Endothelial cell of umbilical vein (primary cell): ENCODE measurements at regions of chr7 and their contacts with region 1.

Region 1: DNA sequence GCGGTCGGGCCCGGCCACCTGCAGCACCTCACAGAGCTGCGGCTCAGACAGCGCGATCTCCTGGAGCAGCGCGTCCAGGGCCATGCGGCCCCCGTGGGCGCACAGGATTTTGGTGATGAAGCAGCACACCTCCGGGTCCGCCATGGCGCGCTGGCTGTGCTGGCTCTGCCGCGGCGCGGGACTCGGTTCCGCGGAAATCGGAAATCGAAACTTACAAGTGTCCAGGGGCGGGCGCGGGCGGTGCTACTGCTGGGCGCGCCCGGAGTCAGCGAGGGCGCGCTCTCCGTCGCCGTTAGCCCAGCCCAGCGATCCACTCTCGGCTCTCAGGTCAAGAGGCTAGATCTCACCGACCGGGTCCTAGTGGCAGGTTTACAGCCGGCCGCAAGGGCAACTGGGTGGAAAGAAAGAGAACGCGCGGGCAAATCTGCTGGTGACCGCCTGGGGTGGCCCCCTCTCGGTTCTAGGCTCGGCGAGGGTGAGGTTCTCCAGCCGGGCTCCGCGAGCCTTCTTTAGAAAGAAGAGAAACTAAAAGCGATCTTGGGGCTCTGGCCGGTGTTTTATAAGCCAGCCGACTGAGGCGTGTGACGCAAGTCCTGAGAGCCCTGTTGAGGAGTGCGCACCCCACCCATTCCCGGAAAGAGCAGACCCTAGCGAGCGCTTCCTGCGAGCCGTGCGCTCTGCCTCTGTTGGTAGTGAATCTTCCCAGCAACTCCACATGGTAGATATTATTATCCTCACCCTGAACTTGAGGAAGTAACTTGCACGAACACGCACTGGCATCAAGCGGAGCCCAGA is at the start of gene ZC3HAV1:
- DNase-seq: peak; percentile 79
- H3K4me3 ChIP-seq: peak within 1 kb of the TSS; percentile 69 to 87 (median 71)
- H3K27ac ChIP-seq: peak within 1 kb of the TSS; percentile 64
- H3K4me1 ChIP-seq: peaks cover 13% of the 10 kb centered on the region
- H3K27me3 ChIP-seq: no peaks in the 10 kb centered on the region
- CTCF ChIP-seq: no peak
- POLR2A ChIP-seq: peak; percentile 92
- total RNA-seq, gene ZC3HAV1: 36.8 and 37.7 TPM in 2 replicates

Region 2: DNA sequence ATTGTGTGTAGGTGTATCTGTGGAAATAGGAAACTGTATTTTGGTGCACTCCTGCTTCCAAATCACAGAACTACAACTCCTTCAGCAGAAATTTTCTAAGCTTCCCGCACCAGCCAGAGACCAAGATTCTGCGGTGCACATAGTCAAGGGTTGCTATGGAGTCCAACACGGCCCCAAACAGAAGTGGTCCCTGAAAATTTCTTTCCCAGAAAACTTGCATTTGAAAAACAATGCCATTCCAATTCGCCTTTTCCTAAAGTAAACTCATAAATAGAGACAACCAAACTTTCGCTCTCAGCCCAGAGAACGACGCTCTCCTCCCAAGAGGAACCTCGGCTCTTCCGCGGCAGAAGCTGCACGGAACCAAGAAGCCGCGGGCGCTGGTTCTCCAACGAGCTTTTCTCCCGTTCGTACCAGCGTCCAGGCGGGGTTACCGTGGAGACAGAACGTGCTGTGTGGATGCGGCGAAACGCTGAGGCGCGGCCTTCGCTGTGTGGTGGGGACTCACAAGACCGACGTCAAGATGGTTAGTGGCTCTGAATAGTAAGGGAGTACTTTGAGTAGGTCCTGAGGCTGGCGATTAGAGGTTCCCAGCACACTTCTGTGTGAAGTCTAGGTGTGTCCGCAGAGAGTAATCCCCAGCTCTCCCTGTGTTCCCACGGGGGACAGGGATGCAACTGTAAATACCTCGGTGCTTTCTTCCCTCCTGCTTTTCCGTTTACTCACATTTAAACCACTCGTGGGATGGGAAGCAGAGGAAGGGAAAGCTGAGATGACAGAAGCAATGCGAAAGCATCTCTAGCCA is 24.2 kb after region 1 on chr7:
- CTCF ChIA-PET with region 1: interaction called, 4 read pairs
- POLR2A ChIA-PET with region 1: no interaction called
- dilution Hi-C with region 1: no loop called
- intact Hi-C with region 1: loop called (anchors 1 kb)
- DNase-seq: peak; percentile 94
- H3K4me3 ChIP-seq: peak overlapping the region; percentile 54 to 87 (median 66)
- H3K27ac ChIP-seq: peak overlapping the region; percentile 41
- H3K4me1 ChIP-seq: peaks cover 4% of the 10 kb centered on the region
- H3K27me3 ChIP-seq: peaks cover 0 to under 1% of the 10 kb centered on the region in 2 experiments
- CTCF ChIP-seq: no peak
- POLR2A ChIP-seq: peak; percentile 66

Region 3: DNA sequence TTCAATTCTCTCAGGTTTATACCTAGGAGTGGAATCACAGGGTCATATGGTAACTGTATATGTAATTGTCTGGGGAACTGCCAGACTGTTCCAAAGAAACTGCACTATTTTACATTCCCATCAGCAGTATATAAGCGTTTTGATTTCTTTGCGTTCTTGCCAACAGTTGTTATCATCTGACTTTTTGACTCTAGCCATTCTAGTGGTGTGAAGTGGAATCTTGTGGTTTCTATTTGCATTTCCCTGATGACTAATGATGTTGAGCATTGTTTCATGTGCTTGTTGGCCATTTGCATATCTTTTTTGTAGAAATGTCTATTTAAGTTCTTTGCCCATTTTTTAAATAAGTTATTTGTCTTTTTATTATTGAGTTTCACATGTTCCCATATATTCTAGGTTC is 44.4 kb after region 1 on chr7:
- CTCF ChIA-PET with region 1: no interaction called
- POLR2A ChIA-PET with region 1: no interaction called
- dilution Hi-C with region 1: no loop called
- intact Hi-C with region 1: loop called (anchors 2 kb)
- DNase-seq: peak; percentile 91
- H3K4me3 ChIP-seq: no peak overlapping the region
- H3K27ac ChIP-seq: no peak overlapping the region
- H3K4me1 ChIP-seq: peaks cover 11% of the 10 kb centered on the region
- H3K27me3 ChIP-seq: no peaks in the 10 kb centered on the region
- CTCF ChIP-seq: no peak
- POLR2A ChIP-seq: no peak

Region 4: DNA sequence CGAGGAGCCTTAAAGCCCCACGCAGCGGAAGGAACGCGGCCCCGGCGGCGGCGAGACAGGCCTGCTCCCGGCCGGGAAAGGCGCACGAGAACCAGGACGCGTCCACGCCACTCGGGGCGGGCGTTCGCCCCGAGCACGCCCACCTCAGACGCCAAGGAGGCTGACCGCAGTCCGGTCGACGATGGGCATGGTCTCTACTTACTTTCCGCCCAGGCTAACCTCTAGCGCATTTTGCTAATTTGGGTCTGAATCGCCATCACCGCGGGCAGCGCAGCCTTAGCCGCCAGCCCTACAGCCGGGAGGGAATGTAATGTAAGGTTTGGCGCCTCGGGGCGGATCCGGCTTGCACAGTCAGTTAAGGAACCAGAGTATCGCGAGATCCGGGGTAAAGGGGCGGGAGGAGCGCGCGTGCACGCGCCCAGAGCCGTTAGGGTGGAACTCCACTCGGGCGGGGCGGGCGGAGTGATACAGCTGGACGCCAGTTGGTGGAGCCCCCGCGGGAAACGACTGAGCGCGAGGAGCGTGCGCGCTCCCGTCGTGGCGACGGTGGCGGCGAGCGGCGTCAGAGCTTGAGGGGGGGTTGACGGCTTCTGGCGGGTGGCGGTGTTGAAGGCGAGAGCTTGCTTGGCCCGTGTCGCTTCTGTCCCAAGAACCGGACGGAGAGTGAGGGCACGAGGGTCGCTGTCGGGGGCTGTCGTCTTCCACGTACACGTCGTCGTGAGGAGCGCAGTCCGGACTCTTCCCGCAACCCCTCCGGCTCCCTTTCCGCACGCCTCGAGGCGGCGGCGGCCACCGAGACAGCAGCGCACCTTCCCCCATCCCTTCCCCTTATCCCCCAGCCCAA is 250.2 kb after region 1 on chr7 and contains the start of gene LUC7L2:
- CTCF ChIA-PET with region 1: no interaction called
- POLR2A ChIA-PET with region 1: no interaction called
- dilution Hi-C with region 1: no loop called
- intact Hi-C with region 1: loop called (anchors 5 kb)
- DNase-seq: peak; percentile 99
- H3K4me3 ChIP-seq: peak within 1 kb of the TSS; percentile 82 to 97 (median 95)
- H3K27ac ChIP-seq: peak within 1 kb of the TSS; percentile 98
- H3K4me1 ChIP-seq: peaks cover 21% of the 10 kb centered on the region
- H3K27me3 ChIP-seq: no peaks in the 10 kb centered on the region
- CTCF ChIP-seq: no peak
- POLR2A ChIP-seq: peak; percentile 98
- total RNA-seq, gene LUC7L2: 85.8 and 87.6 TPM in 2 replicates